Prostate gland (tissue), 2 donors: ENCODE measurements at regions of chr21 and their contacts with region 1.

Region 1: DNA sequence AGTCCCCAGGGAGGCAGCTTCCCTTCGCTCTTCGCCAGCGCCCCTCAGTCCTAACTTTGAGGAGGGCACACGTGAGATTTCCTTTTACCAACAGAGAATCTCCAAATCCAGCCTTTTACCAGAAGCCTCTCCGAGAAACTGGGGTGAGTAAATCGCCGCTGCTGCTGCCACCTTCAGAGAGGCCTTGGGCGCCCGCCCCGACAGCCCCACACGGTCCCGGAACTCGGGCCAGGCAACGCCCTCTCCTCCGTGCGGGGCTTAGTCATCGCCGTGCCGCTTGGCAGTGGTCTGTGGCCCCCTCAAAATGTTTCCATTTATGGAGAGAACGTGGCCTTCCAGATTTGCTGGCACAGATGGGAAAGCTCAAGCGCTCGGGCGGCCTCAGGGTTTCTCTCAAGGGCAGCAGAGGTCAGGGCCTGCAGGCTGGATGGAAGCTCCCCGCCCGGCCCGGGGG is 41.4 kb upstream of the COL6A2 start:
- DNase-seq: no peak
- H3K4me3 ChIP-seq: no peak overlapping the region
- H3K27ac ChIP-seq: peak overlapping the region; percentile 79 to 86
- H3K4me1 ChIP-seq: no peaks in the 10 kb centered on the region
- H3K27me3 ChIP-seq: peaks cover 4% of the 10 kb centered on the region
- CTCF ChIP-seq: no peak
- POLR2A ChIP-seq: no peak

Region 2: GRCh38 chr21:45940621-45941337 is 115.7 kb before region 1 on chr21:
- intact Hi-C with region 1: no loop called
- DNase-seq: no peak
- H3K4me3 ChIP-seq: no peak overlapping the region
- H3K27ac ChIP-seq: no peak overlapping the region
- H3K4me1 ChIP-seq: no peaks in the 10 kb centered on the region
- H3K27me3 ChIP-seq: no peaks in the 10 kb centered on the region
- CTCF ChIP-seq: no peak
- POLR2A ChIP-seq: no peak

Region 3: GRCh38 chr21:45981151-45982089 is 75.1 kb before region 1 on chr21 and contains the start of gene COL6A1:
- intact Hi-C with region 1: loop called (anchors 5 kb)
- DNase-seq: peak; percentile 57
- H3K4me3 ChIP-seq: peak within 1 kb of the TSS; percentile 50 to 63
- H3K27ac ChIP-seq: peak within 1 kb of the TSS; percentile 77 to 79
- H3K4me1 ChIP-seq: no peaks in the 10 kb centered on the region
- H3K27me3 ChIP-seq: no peaks in the 10 kb centered on the region
- CTCF ChIP-seq: peak in 1 of 4 experiments; percentile 9
- POLR2A ChIP-seq: peak; percentile 37
- total RNA-seq, gene COL6A1: 163 to 265 TPM

Region 4: GRCh38 chr21:46092026-46092764 is 35.7 kb after region 1 on chr21:
- intact Hi-C with region 1: loop called (anchors 5 kb)
- DNase-seq: no peak
- H3K4me3 ChIP-seq: no peak overlapping the region
- H3K27ac ChIP-seq: peak overlapping the region; percentile 64 to 67
- H3K4me1 ChIP-seq: no peaks in the 10 kb centered on the region
- H3K27me3 ChIP-seq: no peaks in the 10 kb centered on the region
- CTCF ChIP-seq: no peak
- POLR2A ChIP-seq: no peak